ENCODE measurements at regions of chr2 and their contacts with region 1.

Region 1: DNA sequence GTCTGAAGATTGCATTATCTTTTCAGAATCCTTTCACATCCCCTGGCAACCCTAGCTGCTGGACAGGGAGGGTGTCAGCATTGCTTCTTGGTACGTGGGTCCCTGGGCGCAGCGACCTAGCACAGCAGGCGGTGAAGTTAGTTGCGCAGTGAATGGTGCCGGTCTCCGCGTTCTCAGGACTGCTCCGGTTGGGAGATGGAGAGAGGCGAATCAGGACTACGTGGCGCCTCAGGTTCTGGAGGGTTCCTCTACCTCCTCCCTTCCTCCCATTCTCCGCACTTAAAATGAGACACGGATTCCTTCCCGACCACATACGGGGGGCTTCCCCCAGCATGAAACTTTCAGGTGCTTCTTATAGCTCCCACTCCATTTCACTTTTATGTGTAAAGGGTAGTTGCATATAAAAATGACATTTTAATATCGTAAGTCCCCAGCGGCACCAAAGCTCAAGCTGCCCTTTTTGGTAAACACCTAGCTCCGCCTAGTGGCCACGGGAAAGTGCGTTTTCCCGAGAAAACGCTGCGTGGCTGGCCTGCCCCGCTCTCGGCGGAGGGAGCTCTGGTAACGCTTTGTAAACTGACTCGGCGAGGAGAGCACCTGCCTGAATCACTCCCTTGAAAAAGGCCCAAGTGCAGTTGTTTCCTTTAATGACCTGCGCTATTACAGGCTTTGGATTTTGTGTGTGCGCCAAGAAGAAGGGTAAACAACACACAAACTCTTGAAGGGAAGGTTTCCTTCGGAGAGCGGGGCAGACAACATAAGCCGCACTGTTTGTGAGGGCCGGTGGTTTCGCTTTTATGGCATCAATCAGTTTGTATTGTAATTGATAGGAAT is 32.9 kb upstream of the INHBB start:
- DNase-seq: peak; percentile 86
- ATAC-seq: peak; percentile 77
- H3K4me3 Mint-ChIP-seq: peak overlapping the region; percentile 61
- H3K27ac Mint-ChIP-seq: peak overlapping the region; percentile 16
- H3K4me1 Mint-ChIP-seq: peaks cover 19% of the 10 kb centered on the region
- H3K27me3 Mint-ChIP-seq: no peaks in the 10 kb centered on the region
- CTCF ChIP-seq: peak; percentile 86

Region 2: DNA sequence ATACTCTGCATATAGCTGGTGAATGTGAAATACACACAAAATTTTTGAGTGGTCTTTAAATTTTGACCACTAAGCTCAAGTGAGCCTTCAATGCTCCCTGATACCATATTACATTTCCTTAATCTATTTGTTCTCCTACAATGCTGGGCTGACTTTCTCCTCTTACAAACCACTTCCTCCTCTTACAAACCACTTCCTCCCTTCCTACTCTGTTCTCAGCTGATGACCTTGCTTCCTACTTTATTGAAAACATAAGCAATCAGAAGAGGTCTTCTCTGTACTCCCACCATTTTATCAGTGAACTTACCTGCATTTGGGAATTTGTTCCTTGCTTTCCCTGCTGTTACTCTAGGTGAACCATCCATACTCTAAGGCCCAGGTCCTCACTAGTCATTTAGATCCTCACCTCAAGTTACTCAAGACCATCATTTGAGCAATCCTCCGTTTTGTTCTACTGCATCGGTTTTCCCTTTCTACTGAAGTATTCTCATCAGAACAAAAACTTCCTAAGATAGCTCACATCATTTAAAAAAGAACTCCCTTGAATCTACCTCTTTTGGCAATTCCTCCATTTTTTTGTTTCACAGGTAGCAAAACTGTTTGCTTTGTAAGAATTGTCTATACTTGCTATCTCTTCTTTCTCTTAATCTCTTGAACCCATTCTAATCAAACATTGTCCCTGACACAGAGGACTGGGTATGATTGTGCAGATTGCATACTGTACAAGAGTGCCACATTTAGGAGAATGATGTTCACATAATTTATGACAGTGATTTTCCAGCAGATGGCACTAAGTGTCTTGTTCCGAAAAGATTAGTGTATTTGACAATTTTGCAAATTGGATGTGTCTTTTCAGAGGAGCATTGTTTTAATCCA is 203.7 kb before region 1 on chr2:
- CTCF ChIA-PET with region 1: interaction called, 40 read pairs
- POLR2A ChIA-PET with region 1: no interaction called
- intact Hi-C with region 1: loop called (anchors 10 kb)
- DNase-seq: no peak
- ATAC-seq: peak; percentile 68
- H3K4me3 Mint-ChIP-seq: no peak overlapping the region
- H3K27ac Mint-ChIP-seq: peak overlapping the region; percentile 87
- H3K4me1 Mint-ChIP-seq: peaks cover 19% of the 10 kb centered on the region
- H3K27me3 Mint-ChIP-seq: no peaks in the 10 kb centered on the region
- CTCF ChIP-seq: peak; percentile 54

Region 3: GRCh38 chr2:120206022-120206581 is 107.0 kb before region 1 on chr2:
- CTCF ChIA-PET with region 1: interaction called, 14 read pairs
- POLR2A ChIA-PET with region 1: interaction called, 3 read pairs
- intact Hi-C with region 1: no loop called
- DNase-seq: peak; percentile 74
- ATAC-seq: peak; percentile 79
- H3K4me3 Mint-ChIP-seq: no peak overlapping the region
- H3K27ac Mint-ChIP-seq: no peak overlapping the region
- H3K4me1 Mint-ChIP-seq: peaks cover 11% of the 10 kb centered on the region
- H3K27me3 Mint-ChIP-seq: no peaks in the 10 kb centered on the region
- CTCF ChIP-seq: peak; percentile 74

Region 4: DNA sequence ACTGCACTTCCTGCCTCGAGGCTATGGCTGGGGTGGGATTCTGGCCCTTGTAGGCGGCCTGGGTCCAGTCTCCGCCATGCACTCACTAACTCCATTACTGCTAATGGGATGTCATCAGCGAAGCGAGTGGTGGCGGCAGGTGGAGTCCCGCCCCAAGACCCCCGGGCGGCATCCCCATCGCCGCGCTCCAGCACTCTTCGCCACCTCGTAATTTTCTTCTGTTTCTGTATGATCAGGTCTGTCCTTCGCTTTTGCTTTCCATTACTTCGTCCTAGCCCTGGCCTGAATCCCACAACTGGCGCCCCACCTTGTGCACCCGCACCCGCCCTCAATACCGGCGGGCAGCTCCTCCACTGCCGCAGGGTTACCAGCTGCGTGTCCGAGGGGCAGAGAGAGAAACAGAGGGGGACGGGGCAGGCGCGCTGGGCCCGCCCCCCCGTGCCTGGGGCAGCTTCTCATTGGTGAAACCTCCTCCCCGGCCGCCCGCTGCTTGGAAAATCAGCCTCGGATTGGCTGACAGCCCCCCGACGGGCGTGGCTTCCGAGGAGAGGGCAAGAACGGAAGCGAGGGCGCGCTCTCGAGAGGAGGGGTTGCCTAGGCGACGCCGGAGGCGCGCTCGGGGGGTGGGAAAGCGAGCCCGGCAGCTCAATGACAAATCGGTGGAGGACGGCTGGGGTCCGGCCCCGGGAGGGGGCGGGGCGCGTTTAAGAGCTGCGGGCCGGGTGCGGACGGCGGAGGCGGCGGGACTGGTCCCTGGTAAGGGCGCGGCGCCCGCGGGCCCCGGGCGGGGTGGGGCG is 60.7 kb before region 1 on chr2 and contains the start of gene RALB:
- CTCF ChIA-PET with region 1: interaction called, 15 read pairs
- POLR2A ChIA-PET with region 1: no interaction called
- intact Hi-C with region 1: no loop called
- DNase-seq: peak; percentile 99
- ATAC-seq: peak; percentile 97
- H3K4me3 Mint-ChIP-seq: peak within 1 kb of the TSS; percentile 95
- H3K27ac Mint-ChIP-seq: peak within 1 kb of the TSS; percentile 87
- H3K4me1 Mint-ChIP-seq: peaks cover 35% of the 10 kb centered on the region
- H3K27me3 Mint-ChIP-seq: peaks cover 2% of the 10 kb centered on the region
- CTCF ChIP-seq: no peak
- total RNA-seq, gene RALB: 16.7 to 17.6 TPM

Region 5: DNA sequence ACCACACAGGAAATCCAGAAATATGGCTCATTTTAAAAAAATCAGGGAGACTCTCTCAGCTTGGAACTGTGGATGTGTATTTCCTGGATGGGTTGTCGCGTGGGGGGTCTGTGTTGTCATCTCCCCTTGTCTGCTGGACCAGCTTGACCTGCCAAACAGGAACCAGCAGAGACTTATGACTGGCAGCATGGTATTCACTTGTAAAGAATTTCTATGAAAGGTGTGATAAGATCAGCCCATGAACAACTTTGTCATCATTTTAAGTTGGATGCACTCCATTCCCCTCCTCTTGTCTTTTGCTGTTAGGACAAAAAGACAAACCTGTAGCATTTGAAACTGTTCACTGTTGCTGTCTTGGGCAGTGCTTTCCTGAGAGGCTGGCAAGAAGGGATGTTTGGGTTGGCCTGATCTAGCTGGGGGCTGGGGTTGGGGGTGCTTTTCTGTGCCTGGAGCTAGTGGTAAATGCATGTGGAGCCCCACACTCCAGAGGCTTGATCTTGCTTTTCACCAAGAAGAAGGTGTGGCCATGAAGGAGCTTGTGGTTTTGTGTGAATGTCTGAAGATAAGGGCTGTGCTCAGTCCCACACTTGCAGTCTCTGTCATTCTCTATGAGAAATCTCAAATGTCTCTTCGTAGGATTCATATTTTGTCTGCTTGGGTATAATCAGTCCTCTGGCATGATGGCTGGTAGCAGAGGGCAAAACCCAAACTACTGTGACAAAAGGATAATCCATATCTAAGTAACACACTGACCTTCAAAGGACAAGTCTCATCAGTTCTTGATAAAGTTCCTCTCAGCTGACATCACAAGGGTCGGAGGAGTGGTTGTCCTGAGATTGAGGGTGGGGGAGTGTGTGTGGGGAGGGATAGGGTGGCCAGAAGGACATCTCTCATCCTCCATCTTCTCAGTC is 21.4 kb before region 1 on chr2:
- CTCF ChIA-PET with region 1: interaction called, 23 read pairs
- POLR2A ChIA-PET with region 1: no interaction called
- intact Hi-C with region 1: no loop called
- DNase-seq: no peak
- ATAC-seq: no peak
- H3K4me3 Mint-ChIP-seq: no peak overlapping the region
- H3K27ac Mint-ChIP-seq: no peak overlapping the region
- H3K4me1 Mint-ChIP-seq: peaks cover 13% of the 10 kb centered on the region
- H3K27me3 Mint-ChIP-seq: no peaks in the 10 kb centered on the region
- CTCF ChIP-seq: no peak

Region 6: GRCh38 chr2:120323214-120323613 is 10.1 kb after region 1 on chr2:
- CTCF ChIA-PET with region 1: interaction called, 13 read pairs
- POLR2A ChIA-PET with region 1: no interaction called
- intact Hi-C with region 1: no loop called
- DNase-seq: no peak
- ATAC-seq: no peak
- H3K4me3 Mint-ChIP-seq: no peak overlapping the region
- H3K27ac Mint-ChIP-seq: no peak overlapping the region
- H3K4me1 Mint-ChIP-seq: no peaks in the 10 kb centered on the region
- H3K27me3 Mint-ChIP-seq: no peaks in the 10 kb centered on the region
- CTCF ChIP-seq: no peak

Measured in activated CD8-positive, alpha-beta T cell treated with anti-CD3 and anti-CD28 coated beads for 36 hours (primary cell).